Activated CD4-positive, alpha-beta memory T cell treated with anti-CD3 and anti-CD28 coated beads, Interleukin-2, amount 10 ng/mL, durations not matched to agents 7 days and 5 days (primary cell): ENCODE measurements at regions of chr1 and their contacts with region 1.

Region 1: DNA sequence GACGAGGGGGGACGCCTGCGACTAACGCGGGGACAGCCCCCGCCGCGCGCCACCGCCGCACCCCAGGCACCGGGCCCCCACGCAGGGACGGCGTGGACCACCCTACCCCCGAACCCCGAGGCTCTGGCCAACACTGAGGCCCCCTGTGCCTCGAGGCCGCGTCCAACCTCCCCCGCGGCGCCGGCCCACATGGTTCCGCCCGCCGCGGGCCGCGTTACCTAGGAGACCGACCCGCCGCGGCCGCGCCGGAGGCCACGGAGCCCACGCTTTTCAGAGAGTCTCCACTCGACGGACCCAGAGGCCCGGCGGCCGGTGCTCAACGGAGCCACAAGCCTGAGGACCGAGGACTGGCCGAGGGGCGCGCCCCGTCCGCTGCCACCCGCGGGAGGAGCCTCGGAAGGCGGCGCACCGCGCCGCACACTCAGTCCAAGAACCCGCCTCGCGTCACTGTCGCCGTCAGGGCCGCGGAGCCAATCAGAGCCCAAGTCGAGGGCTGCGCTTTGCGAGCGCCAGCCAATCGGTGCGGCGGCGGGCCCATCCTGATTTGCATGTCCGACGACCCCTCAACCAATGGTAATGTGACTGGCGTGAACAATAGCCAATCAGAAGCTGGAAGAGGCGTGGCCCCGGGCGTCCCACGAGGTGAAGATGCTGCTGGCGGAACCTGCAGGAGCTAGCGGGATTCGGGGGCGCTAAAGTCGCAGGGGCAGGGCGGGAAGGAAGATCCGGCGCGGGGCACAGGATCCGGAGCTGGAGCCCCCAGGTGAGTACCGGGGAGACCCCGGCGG is at the start of gene NPHP4:
- DNase-seq: peak; percentile 100
- H3K4me3 Mint-ChIP-seq: peak within 1 kb of the TSS; percentile 99
- H3K27ac Mint-ChIP-seq: peak within 1 kb of the TSS; percentile 99
- H3K4me1 Mint-ChIP-seq: peaks cover 35% of the 10 kb centered on the region
- H3K27me3 Mint-ChIP-seq: no peaks in the 10 kb centered on the region
- total RNA-seq, gene NPHP4: 18.1 to 19.1 TPM

Region 2: GRCh38 chr1:5954964-5955363 is 37.3 kb before region 1 on chr1:
- CTCF ChIA-PET with region 1: no interaction called
- POLR2A ChIA-PET with region 1: interaction called, 18 read pairs
- DNase-seq: no peak
- H3K4me3 Mint-ChIP-seq: peak overlapping the region; percentile 38
- H3K27ac Mint-ChIP-seq: peak overlapping the region; percentile 85
- H3K4me1 Mint-ChIP-seq: peaks cover 60% of the 10 kb centered on the region
- H3K27me3 Mint-ChIP-seq: no peaks in the 10 kb centered on the region